Activated T-helper 1 cell treated with anti-CD3 and anti-CD28 coated beads, Interleukin-12 subunit alpha, Interleukin-12 subunit beta, Interleukin-2, Interleukin-4 antibody, amounts not matched to agents 30 ng/mL and 10 ng/mL and 1 ng/mL, durations not matched to agents 14 hours and 24 hours and 36 hours (primary cell): ENCODE measurements at regions of chr1 and their contacts with region 1.

Region 1: DNA sequence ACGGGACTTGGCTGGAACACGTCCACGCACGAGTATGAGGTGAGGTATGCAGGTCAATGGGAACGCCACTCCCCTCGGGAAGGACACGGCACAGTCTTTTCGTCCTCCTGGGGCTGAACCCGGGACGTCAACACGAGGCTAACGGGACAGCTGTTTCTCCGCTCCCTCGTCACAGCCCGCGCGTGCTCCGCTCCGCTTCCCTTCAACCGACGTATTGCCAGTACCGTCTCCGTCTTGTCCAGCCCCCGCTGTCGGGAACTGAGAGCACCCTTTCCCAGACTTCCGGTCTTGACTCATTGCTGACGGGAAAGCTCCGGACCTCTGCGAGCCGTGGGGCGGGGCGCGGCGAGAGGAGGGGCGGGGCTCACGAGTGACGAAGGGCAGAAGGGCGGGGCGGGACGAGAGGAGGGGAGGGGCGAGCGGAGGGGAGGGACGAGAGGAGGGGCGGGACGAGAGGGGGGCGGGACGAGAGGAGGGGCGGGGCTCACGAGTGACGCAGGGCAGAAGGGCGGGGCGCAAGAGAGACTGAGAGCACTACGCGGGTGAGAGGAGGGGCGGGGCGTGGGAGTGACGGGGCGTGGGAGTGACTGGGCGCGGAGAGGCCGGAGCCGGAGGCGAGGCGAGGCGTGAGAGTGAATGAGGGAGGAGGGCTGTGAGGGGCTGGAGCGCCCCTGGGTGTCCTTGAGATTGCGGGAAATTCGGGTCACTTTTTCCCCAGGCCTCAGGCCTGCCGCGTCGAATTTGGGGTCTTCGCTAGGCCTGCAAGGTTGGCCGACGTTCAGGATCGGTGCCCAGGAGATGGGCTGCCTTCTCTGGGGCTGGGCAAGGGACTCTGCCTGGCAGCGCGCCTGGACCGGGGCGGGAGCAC is 22.2 kb upstream of the CFAP126 start:
- DNase-seq: peak; percentile 91
- H3K4me3 Mint-ChIP-seq: peak overlapping the region; percentile 87
- H3K27ac Mint-ChIP-seq: peak overlapping the region; percentile 97
- H3K4me1 Mint-ChIP-seq: peaks cover 52% of the 10 kb centered on the region
- H3K27me3 Mint-ChIP-seq: no peaks in the 10 kb centered on the region

Region 2: DNA sequence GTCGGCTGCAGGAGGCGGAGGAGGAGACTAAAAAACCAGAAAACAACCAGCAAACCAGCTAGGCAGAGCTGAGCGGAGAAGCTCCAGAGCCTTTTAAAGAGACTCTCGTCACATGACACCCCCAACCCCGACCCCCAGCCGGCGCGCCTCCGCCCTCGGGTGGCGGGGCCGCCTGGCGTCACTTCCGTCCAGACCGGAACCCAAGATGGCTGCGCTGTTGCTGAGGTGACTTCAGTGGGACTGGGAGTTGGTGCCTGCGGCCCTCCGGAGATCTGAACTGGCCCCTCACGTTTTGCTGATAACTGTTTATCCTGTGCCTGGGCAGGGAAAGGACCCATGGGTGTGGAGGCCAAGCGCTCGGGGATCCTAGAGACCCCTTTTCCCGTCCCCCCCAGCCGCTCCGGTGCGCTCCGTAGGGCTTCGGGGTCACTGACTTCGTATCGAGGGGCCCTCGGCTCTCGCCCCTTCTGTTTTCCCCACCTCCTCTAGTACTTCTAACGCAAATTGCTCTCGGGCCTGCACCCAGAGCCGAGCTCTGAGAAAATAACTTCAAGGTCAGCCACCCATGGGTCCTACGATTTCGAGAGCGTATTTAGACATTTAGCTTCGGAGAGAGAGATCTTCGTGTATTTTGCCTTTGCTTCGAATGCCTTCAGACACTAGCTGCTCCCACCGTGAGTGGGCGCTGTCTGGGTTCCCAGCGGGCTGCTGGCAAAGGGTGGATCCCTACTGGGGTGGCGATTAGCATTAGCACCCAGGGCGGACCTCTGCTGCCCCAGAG is 75.5 kb before region 1 on chr1 and contains the start of gene SDHC:
- intact Hi-C with region 1: loop called (anchors 2 kb)
- DNase-seq: peak; percentile 88
- H3K4me3 Mint-ChIP-seq: peak within 1 kb of the TSS; percentile 99
- H3K27ac Mint-ChIP-seq: peak within 1 kb of the TSS; percentile 87
- H3K4me1 Mint-ChIP-seq: peaks cover 26% of the 10 kb centered on the region
- H3K27me3 Mint-ChIP-seq: peaks cover 2% of the 10 kb centered on the region
- total RNA-seq, gene SDHC: 157 and 162 TPM in 2 replicates